A673 (cell line): ENCODE measurements at regions of chr17 and their contacts with region 1.

Region 1: GRCh38 chr17:10875979-10876555 is 38.2 kb upstream of the PIRT start:
- DNase-seq: peak; percentile 65
- H3K4me3 ChIP-seq: no peak overlapping the region
- H3K27ac ChIP-seq: no peak overlapping the region
- H3K4me1 ChIP-seq: peaks cover 7% of the 10 kb centered on the region
- H3K27me3 ChIP-seq: no peaks in the 10 kb centered on the region
- CTCF ChIP-seq: peak; percentile 75

Region 2: DNA sequence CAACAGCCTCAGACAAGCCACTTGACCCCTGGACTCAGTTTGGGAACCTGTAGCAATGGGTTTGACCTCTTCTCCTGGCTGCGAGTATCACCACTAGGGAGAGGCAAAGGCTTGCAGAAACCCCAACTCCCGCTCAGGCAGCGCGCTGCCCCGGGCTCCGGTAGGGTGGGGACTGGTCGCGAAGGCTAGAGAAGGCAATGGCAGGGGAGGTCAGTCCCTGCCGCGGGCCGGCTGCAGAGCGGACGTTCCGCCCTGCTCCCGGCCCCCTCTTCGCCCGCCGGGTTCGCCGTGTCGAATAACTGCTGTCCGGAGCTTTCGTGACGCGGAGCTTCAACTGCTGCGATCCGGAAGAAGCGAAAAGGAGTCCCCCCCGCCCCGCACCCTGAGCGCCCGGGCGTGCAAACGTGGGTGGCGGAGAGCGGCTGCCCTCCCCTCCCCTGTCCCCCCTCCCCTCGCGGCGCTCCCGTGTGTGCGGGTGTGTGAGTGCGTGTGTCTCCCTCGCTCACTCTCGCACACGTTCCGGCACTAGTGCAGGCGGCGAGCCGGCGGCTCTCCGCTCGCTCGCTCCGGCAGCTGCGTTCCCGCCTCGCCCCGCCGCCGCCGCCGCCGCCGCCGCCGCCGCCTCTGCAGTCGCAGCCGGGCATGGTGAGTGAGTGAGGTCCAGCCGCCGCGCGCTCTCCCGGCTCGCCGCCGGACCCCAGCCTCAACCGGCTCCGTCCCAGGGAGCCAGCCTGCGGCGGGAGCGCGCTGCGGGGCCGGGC is 364.2 kb after region 1 on chr17:
- CTCF ChIA-PET with region 1: interaction called, 3 read pairs
- POLR2A ChIA-PET with region 1: no interaction called
- intact Hi-C with region 1: loop called (anchors 5 kb)
- DNase-seq: peak; percentile 77
- H3K4me3 ChIP-seq: peak overlapping the region; percentile 65
- H3K27ac ChIP-seq: peak overlapping the region; percentile 80
- H3K4me1 ChIP-seq: peaks cover 32% of the 10 kb centered on the region
- H3K27me3 ChIP-seq: no peaks in the 10 kb centered on the region
- CTCF ChIP-seq: peak; percentile 55

Region 3: DNA sequence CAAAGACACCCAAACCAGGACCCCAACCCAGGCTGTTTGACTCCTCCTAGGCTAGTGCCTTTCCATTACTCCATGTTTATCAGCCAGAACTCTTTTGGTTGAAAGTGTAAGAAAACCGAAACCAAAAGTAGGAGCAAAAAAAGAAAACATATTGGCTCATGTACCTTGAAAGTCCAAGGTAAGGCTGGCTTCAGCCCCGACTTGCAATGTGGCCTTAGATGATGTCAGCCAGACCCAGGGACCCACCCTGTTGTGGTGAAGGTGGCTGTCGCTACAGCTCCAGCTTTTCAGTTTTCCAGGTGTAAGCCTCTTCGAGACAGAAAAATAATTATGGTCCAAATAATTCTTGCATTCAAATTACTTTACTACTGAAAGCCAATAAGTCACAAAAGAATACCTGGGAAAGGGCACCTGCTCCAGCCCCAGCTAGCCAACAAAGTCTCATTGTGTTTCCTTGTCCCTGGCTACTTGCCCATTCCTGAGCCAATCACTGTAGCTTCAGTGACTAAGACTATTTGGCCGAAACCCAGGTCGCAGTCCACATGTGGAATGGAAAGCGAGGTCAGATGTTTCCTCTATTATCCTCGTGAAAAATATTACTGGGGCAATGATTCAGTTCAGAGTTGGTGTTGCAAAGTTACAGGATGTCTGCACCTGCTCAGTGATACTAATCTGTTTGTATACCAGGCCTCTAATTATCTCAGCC is 742.9 kb after region 1 on chr17:
- CTCF ChIA-PET with region 1: no interaction called
- POLR2A ChIA-PET with region 1: no interaction called
- intact Hi-C with region 1: no loop called
- DNase-seq: no peak
- H3K4me3 ChIP-seq: no peak overlapping the region
- H3K27ac ChIP-seq: no peak overlapping the region
- H3K4me1 ChIP-seq: no peaks in the 10 kb centered on the region
- H3K27me3 ChIP-seq: no peaks in the 10 kb centered on the region
- CTCF ChIP-seq: no peak

Region 4: GRCh38 chr17:11644261-11645212 is 768.5 kb after region 1 on chr17:
- CTCF ChIA-PET with region 1: interaction called, 8 read pairs
- POLR2A ChIA-PET with region 1: interaction called, 8 read pairs
- intact Hi-C with region 1: loop called (anchors 5 kb)
- DNase-seq: peak; percentile 94
- H3K4me3 ChIP-seq: no peak overlapping the region
- H3K27ac ChIP-seq: no peak overlapping the region
- H3K4me1 ChIP-seq: peaks cover 35% of the 10 kb centered on the region
- H3K27me3 ChIP-seq: no peaks in the 10 kb centered on the region
- CTCF ChIP-seq: peak; percentile 94

Region 5: DNA sequence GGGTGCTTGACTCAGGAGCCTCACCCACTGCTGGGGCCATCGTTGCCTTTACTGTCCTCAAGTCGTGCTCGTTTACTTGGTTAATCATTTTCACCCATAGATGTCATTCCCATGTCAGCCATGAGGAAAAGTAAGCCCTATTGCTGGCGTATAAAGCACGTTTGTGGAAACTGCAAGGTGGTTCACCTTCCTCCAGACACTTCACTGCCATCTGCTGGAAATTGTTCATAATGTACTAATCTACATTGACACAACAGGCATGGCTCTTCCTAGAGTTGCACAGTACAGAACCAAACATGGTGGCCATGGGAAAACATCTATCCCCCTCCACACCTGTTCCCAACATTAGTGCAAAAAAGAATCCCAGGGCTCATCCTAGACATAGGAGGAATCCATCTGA is 1004.6 kb after region 1 on chr17:
- CTCF ChIA-PET with region 1: no interaction called
- POLR2A ChIA-PET with region 1: no interaction called
- intact Hi-C with region 1: loop called (anchors 2 kb)
- DNase-seq: peak; percentile 85
- H3K4me3 ChIP-seq: no peak overlapping the region
- H3K27ac ChIP-seq: no peak overlapping the region
- H3K4me1 ChIP-seq: no peaks in the 10 kb centered on the region
- H3K27me3 ChIP-seq: no peaks in the 10 kb centered on the region
- CTCF ChIP-seq: peak; percentile 66

Region 6: DNA sequence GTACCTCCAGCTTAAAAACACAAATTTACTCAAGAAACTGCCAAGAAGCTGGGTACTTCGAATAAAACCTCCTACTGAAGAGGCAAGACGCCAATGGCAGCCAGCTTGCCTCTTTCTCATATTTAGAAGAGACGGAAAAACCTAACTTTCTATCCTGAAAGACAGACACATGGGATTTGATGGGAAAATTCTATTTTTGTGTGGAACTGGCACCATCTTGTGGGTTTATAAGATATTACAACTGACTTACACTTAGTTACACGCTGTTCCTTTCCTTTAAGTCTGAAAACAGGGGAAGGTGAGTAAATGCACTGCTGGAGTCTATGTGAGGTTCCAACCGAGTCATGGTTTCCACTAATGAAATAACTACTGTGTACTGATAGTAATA is 1110.9 kb after region 1 on chr17:
- CTCF ChIA-PET with region 1: interaction called, 6 read pairs
- POLR2A ChIA-PET with region 1: no interaction called
- intact Hi-C with region 1: loop called (anchors 1 kb)
- DNase-seq: peak; percentile 69
- H3K4me3 ChIP-seq: no peak overlapping the region
- H3K27ac ChIP-seq: no peak overlapping the region
- H3K4me1 ChIP-seq: peaks cover 10% of the 10 kb centered on the region
- H3K27me3 ChIP-seq: no peaks in the 10 kb centered on the region
- CTCF ChIP-seq: peak; percentile 63